ENCODE measurements at regions of chr11 and their contacts with region 1.

Region 1: DNA sequence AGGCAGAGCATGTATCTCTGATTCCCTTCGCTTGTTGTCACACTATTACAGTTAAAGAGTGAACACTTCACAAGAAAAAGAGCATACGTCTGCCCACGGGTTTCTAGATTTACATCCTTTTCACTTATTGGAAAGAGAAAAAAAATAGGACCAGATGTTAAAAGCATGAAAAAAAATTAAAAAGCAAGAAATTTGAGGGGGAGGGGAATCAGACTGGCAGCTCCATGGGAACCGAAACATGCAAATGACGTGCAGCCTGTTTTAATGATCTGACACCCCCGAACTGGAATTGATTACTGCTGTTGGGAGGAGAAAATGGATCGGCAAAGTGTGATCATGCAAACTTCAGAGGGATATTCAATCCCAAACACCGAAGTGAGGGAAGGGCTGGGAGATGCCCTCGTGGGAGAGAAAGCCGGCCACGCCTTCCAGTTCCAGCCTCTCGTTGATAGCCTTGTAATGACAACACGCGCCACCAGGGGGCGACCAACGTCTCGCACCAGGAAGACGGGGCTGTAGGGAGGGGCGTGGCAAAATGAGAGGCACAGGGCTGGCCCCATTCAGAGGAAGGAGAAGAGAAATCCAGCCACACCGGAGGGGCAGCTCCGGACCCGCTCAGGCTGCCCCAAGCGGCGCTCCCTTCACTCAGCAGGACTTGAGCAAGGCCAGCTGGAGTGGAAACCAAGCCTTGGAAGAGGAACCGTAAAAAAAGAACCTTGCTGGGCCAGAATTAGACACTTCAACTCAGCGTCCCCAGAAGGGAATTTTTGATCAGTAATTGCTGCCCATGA is 53.8 kb upstream of the SYT13 start:
- DNase-seq: peak; percentile 96
- H3K4me3 ChIP-seq: peak overlapping the region in 1 of 4 donors; percentile 11
- H3K27ac ChIP-seq: no peak overlapping the region
- H3K4me1 ChIP-seq: peaks cover 0 to 8% (median 3%) of the 10 kb centered on the region in 4 donors
- H3K27me3 ChIP-seq: peaks cover 22% of the 10 kb centered on the region
- CTCF ChIP-seq: peak; percentile 89 to 95 (median 91)
- EP300 ChIP-seq: no peak
- POLR2A ChIP-seq: no peak

Region 2: DNA sequence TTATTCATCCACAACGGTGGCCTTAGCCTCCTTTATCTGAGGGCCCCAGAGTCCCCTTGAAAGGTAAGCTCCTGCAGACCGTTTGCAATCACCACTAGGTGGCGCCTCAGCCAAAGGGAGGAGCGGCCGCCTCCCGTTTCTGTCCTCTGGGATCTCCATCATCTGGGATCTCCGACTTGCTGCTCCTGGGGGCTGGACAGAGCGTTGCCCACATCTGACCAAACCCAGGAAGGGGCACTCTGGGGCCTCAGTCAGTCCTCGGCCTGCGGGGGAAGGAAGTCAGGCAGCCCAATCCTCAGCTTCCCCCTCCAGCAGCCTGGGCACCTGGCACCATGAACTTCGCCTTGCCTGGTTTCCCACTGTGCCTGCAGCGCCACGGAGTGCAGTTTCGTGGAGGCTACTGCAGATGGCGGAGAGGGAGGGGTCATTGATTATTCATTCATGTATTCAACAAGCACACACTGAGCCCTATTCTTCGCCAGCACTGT is 412.7 kb before region 1 on chr11:
- in situ Hi-C with region 1: loop called in 3 of 4 experiments (anchors 10 to 25 kb)
- intact Hi-C with region 1: no loop called
- DNase-seq: peak; percentile 74
- H3K4me3 ChIP-seq: no peak overlapping the region
- H3K27ac ChIP-seq: no peak overlapping the region
- H3K4me1 ChIP-seq: no peaks in the 10 kb centered on the region
- H3K27me3 ChIP-seq: no peaks in the 10 kb centered on the region
- CTCF ChIP-seq: peak; percentile 80 to 92 (median 89)
- EP300 ChIP-seq: no peak
- POLR2A ChIP-seq: no peak

Region 3: DNA sequence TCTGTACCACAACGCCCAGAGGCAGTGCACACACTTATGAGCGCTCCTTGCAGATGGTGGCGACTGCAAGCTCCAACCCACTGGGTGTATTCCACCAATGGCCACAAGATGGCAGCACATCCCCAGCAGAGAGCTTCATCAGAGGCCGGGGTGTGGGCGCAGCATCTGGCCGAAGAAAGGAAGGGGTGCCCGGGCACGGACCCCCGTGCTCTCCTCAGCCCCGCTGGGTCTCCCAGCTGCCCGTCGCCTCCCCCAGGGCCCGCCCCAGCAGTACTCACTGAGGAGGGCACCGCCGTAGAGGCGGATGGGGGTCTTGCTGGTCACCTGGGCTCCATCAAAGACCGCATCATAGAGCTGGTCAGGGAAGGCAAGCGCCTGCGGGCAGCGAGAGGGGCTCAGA is 403.4 kb before region 1 on chr11:
- in situ Hi-C with region 1: loop called in 2 of 4 experiments (anchors 25 kb)
- intact Hi-C with region 1: no loop called
- DNase-seq: peak; percentile 88
- H3K4me3 ChIP-seq: no peak overlapping the region
- H3K27ac ChIP-seq: no peak overlapping the region
- H3K4me1 ChIP-seq: peaks cover 0 to 5% (median 0%) of the 10 kb centered on the region in 4 donors
- H3K27me3 ChIP-seq: no peaks in the 10 kb centered on the region
- CTCF ChIP-seq: peak; percentile 96 to 98 (median 97)
- EP300 ChIP-seq: no peak
- POLR2A ChIP-seq: no peak

Region 4: DNA sequence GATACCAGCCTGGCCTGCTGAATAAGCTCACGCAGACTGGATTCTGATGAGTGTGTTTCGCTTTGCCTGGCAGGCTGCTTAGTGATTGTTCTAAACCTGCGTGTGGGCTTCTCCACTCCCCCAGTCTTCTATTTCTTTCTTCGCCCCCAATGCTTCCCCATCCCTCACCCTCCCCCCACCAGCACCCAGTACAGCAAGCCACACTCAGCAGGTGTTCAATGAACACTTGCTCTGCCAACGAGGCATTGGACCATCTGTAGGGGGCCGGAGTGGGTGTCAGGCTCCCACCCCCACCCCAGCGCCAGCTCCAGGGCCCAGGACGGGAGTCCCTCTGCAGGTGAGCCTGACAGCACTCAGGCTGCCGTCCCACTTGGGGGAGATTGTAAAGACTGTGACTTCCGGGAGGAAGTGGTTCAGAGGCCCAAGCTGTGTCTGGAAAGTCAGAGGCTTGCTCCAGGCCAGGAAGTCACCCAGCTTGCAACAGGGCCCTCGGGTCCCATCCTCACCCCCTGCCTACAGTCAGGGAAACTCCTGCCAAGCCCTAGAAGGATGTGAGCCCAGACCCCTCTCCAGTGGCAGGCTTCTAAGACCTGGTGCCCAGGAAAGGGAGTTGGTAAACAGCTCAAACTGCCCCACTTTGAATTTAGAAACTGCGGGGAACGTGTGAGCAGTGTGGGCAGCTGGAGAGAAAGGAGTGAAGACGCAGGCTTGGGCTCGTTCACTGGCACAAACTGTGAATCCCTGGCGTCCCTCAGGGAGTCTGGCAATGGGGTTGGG is 259.8 kb before region 1 on chr11:
- in situ Hi-C with region 1: no loop called
- intact Hi-C with region 1: no loop called
- DNase-seq: peak; percentile 51
- H3K4me3 ChIP-seq: no peak overlapping the region
- H3K27ac ChIP-seq: peak overlapping the region; percentile 14 to 69 (median 38)
- H3K4me1 ChIP-seq: peaks cover 12 to 28% (median 16%) of the 10 kb centered on the region in 4 donors
- H3K27me3 ChIP-seq: no peaks in the 10 kb centered on the region
- CTCF ChIP-seq: no peak
- EP300 ChIP-seq: no peak
- POLR2A ChIP-seq: no peak

Region 5: GRCh38 chr11:45102810-45103621 is 236.9 kb before region 1 on chr11:
- in situ Hi-C with region 1: loop called in 1 of 4 experiments (anchors 10 kb)
- intact Hi-C with region 1: no loop called
- DNase-seq: peak; percentile 51
- H3K4me3 ChIP-seq: peak overlapping the region in 1 of 4 donors; percentile 5
- H3K27ac ChIP-seq: no peak overlapping the region
- H3K4me1 ChIP-seq: peaks cover 0 to 12% (median 0%) of the 10 kb centered on the region in 4 donors
- H3K27me3 ChIP-seq: peaks cover 13% of the 10 kb centered on the region
- CTCF ChIP-seq: peak; percentile 93 to 98 (median 96)
- EP300 ChIP-seq: no peak
- POLR2A ChIP-seq: no peak